Esophagus muscularis mucosa (tissue), 4 donors: ENCODE measurements at regions of chr5 and their contacts with region 1.

Region 1: DNA sequence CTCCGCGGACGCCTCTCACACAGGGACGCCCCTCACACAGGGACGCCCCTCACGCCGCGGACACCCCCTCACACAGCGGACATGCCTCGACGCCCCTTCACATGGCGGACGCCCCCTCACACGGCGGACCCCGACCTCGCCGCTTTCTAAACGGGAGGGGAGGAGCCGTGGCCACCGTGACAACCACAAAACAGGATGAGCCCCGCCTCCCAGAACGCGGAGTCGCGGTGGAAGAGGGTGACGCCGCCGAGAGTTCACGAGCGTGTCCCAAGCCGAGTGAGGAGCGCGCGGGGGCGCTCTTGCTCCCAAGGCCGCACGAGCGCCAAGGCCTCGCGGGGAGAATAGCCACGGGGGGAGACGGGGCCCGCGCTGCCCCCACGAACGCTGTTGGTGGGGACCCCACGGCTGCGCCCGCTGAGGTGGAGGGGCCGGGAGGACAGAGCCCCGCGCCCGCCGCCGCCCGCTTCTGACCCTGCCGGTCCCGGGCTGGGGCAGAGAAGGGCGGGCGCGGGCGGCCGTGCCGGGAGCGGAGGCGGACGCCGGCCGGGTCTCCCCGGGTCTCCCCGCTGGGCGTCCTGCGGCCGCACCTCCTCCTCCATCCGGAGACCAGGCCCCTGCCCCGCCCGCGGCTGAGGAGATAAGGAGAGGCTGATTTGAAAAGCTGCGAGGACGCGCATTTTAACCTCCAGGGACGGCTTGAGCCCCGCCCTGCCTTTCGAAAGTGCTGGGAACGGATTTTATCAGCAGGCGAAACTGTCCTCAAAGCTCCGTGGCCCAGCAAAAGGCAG is 3.9 kb upstream of the NKD2 start:
- DNase-seq: no peak
- H3K4me3 ChIP-seq: peak overlapping the region; percentile 69 to 73 (median 71)
- H3K27ac ChIP-seq: peak overlapping the region; percentile 71 to 79 (median 76)
- H3K4me1 ChIP-seq: peaks cover 15 to 46% (median 41%) of the 10 kb centered on the region in 4 donors
- H3K27me3 ChIP-seq: peaks cover 0 to 46% (median 13%) of the 10 kb centered on the region in 4 donors
- CTCF ChIP-seq: peak; percentile 34 to 46 (median 41)
- EP300 ChIP-seq: no peak
- POLR2A ChIP-seq: no peak

Region 2: DNA sequence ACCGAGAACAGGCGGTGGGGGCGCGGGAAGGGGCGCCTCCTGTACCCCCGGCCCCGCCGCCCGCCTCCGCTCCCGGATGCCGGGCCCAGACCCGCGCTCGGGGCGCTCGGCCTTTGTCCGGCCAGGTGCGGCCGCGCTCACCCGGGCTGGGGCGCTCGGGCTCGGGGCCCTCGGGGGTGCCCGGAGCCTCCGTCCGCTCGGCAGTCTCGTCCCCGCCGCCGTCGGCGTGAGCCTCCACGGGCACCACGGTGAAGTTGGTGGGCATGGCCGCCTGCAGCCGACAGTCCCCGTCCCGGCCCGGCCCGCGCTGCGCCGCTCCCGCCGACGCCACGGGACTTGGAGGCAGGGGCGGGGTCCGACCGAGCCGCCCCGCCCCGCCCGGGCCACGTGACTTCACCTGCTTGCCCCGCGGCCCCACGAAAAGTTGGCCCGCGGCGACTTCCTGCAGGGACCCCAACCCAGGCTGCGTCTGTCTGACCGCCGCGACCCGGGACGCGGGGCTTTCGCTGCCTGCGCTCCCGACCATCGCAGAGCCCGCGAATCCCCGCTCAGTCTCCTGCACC is 107.2 kb after region 1 on chr5 and contains the start of gene SLC12A7:
- intact Hi-C with region 1: loop called (anchors 10 kb)
- DNase-seq: no peak
- H3K4me3 ChIP-seq: peak within 1 kb of the TSS; percentile 76 to 96 (median 89)
- H3K27ac ChIP-seq: peak within 1 kb of the TSS; percentile 78 to 90 (median 85)
- H3K4me1 ChIP-seq: peaks cover 32 to 55% (median 43%) of the 10 kb centered on the region in 4 donors
- H3K27me3 ChIP-seq: no peaks in the 10 kb centered on the region
- CTCF ChIP-seq: no peak
- EP300 ChIP-seq: no peak
- POLR2A ChIP-seq: peak; percentile 68
- total RNA-seq, gene SLC12A7: 21.6 to 35.8 (median 25.4) TPM